Naive thymus-derived CD4-positive, alpha-beta T cell (primary cell): ENCODE measurements at regions of chr12 and their contacts with region 1.

Region 1: GRCh38 chr12:51341259-51342007 is 5.0 kb downstream of the CELA1 start:
- DNase-seq: peak; percentile 36 to 79 (median 69)
- ATAC-seq: peak; percentile 96
- H3K4me3 ChIP-seq: peak overlapping the region; percentile 6
- H3K4me3 Mint-ChIP-seq: peak overlapping the region; percentile 41 to 84 (median 65)
- H3K27ac ChIP-seq: peak overlapping the region; percentile 39
- H3K27ac Mint-ChIP-seq: peak overlapping the region; percentile 38 to 92 (median 84)
- H3K4me1 ChIP-seq: peaks cover 4 to 8% of the 10 kb centered on the region in 2 donors
- H3K4me1 Mint-ChIP-seq: peaks cover 14 to 26% (median 16%) of the 10 kb centered on the region in 7 donors
- H3K27me3 ChIP-seq: no peaks in the 10 kb centered on the region
- H3K27me3 Mint-ChIP-seq: no peaks in the 10 kb centered on the region

Region 2: GRCh38 chr12:50211392-50212070 is 1129.9 kb before region 1 on chr12:
- CTCF ChIA-PET with region 1: no interaction called
- POLR2A ChIA-PET with region 1: no interaction called
- intact Hi-C with region 1: no loop called
- DNase-seq: peak in 1 of 9 donors; percentile 20
- ATAC-seq: no peak
- H3K4me3 ChIP-seq: peak overlapping the region; percentile 36
- H3K4me3 Mint-ChIP-seq: peak overlapping the region; percentile 69 to 86 (median 74)
- H3K27ac ChIP-seq: peak overlapping the region; percentile 65
- H3K27ac Mint-ChIP-seq: peak overlapping the region; percentile 86 to 98 (median 94)
- H3K4me1 ChIP-seq: peaks cover 15 to 35% of the 10 kb centered on the region in 2 donors
- H3K4me1 Mint-ChIP-seq: peaks cover 25 to 52% (median 44%) of the 10 kb centered on the region in 7 donors
- H3K27me3 ChIP-seq: no peaks in the 10 kb centered on the region
- H3K27me3 Mint-ChIP-seq: no peaks in the 10 kb centered on the region

Region 3: GRCh38 chr12:51238510-51239334 is 102.7 kb before region 1 on chr12 and contains the start of gene DAZAP2:
- CTCF ChIA-PET with region 1: interaction called, 14 read pairs
- POLR2A ChIA-PET with region 1: interaction called, 5 read pairs
- intact Hi-C with region 1: no loop called
- DNase-seq: peak; percentile 82 to 94 (median 92)
- ATAC-seq: peak; percentile 93
- H3K4me3 ChIP-seq: peak within 1 kb of the TSS; percentile 98
- H3K4me3 Mint-ChIP-seq: peak within 1 kb of the TSS; percentile 91 to 99 (median 97)
- H3K27ac ChIP-seq: peak within 1 kb of the TSS; percentile 100
- H3K27ac Mint-ChIP-seq: peak within 1 kb of the TSS; percentile 97 to 100 (median 100)
- H3K4me1 ChIP-seq: peaks cover 24 to 29% of the 10 kb centered on the region in 2 donors
- H3K4me1 Mint-ChIP-seq: peaks cover 36 to 50% (median 42%) of the 10 kb centered on the region in 7 donors
- H3K27me3 ChIP-seq: no peaks in the 10 kb centered on the region
- H3K27me3 Mint-ChIP-seq: peaks cover 0 to 4% (median 0%) of the 10 kb centered on the region in 5 donors
- total RNA-seq, gene DAZAP2: 231 to 306 (median 271) TPM

Region 4: GRCh38 chr12:51270067-51270970 is 71.1 kb before region 1 on chr12 and contains the start of gene SMAGP:
- CTCF ChIA-PET with region 1: interaction called, 62 read pairs
- POLR2A ChIA-PET with region 1: interaction called, 43 read pairs
- intact Hi-C with region 1: loop called (anchors 1 kb)
- DNase-seq: peak; percentile 13 to 62 (median 36)
- ATAC-seq: peak; percentile 68
- H3K4me3 ChIP-seq: peak within 1 kb of the TSS; percentile 57
- H3K4me3 Mint-ChIP-seq: peak within 1 kb of the TSS; percentile 90 to 98 (median 94)
- H3K27ac ChIP-seq: peak within 1 kb of the TSS; percentile 62
- H3K27ac Mint-ChIP-seq: peak within 1 kb of the TSS; percentile 55 to 96 (median 90)
- H3K4me1 ChIP-seq: peaks cover 5 to 20% of the 10 kb centered on the region in 2 donors
- H3K4me1 Mint-ChIP-seq: peaks cover 19 to 29% (median 24%) of the 10 kb centered on the region in 7 donors
- H3K27me3 ChIP-seq: no peaks in the 10 kb centered on the region
- H3K27me3 Mint-ChIP-seq: peaks cover 0 to 34% (median 0%) of the 10 kb centered on the region in 5 donors
- total RNA-seq, gene SMAGP: 1.5 to 7.4 (median 4.2) TPM

Region 5: DNA sequence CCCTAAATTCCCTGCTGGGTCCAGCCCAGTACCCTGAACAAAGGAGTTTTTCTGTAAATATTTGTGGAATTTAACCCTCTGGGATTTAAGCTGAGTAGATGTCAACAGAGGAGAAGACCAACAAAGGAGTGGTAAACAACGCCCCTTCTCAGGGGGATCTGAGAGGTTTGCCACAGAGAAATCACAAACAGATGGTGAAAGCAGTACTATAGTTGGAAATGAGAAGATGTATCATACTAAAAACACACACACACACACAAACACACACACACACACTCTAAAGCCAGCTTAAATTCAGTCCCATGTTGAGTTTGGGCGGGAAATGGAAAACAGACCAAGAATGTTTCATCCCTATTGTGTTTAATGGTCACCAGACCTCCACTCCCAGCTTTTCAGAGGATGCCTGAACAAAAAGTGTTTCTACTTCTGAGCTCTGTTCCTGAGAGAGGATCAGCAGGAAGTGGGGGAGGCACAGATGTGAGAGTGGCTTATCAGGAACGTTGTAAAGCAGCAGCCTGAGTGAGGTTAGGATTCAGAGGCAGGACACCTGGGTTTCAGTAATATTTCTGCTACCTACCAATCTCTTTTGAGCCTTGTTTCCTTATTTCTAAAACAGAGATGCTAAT is 20.6 kb before region 1 on chr12:
- CTCF ChIA-PET with region 1: interaction called, 88 read pairs
- POLR2A ChIA-PET with region 1: interaction called, 320 read pairs
- intact Hi-C with region 1: loop called (anchors 1 kb)
- DNase-seq: peak in 3 of 9 donors; percentile 20 to 34 (median 21)
- ATAC-seq: no peak
- H3K4me3 ChIP-seq: peak overlapping the region; percentile 58
- H3K4me3 Mint-ChIP-seq: peak overlapping the region; percentile 69 to 99 (median 94)
- H3K27ac ChIP-seq: peak overlapping the region; percentile 95
- H3K27ac Mint-ChIP-seq: peak overlapping the region; percentile 89 to 99 (median 96)
- H3K4me1 ChIP-seq: peaks cover 58 to 65% of the 10 kb centered on the region in 2 donors
- H3K4me1 Mint-ChIP-seq: peaks cover 56 to 90% (median 72%) of the 10 kb centered on the region in 7 donors
- H3K27me3 ChIP-seq: no peaks in the 10 kb centered on the region
- H3K27me3 Mint-ChIP-seq: no peaks in the 10 kb centered on the region

Region 6: DNA sequence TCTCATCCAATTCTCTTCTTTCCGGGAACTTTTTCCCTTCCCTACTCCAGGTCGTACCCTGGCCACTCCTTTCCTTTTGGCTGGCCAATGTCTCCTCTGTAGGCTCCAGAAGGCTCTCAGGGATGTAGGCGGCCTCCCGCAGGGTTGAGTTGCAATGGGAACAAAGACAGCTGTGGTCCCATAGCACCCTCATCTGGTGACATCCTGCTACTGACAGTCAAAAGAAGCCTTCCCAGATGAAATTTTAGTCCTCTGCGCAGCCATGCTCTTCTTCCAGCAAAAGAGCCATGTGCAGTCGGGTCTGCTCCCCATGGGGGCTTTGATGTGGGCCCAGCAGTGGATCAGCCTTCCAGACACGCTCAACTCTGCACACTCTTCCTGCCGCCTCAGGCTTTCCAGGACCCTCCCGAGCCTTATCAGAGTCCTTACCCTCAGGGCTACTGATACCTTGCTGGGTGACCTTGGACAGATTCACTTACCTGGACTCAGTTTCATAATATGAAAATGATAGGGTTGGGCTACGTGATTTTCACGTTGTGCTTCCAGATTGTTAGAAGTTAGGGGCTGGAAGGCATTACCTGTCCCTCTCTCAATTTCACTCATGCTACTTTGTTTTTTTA is 10.6 kb after region 1 on chr12:
- CTCF ChIA-PET with region 1: interaction called, 18 read pairs
- POLR2A ChIA-PET with region 1: no interaction called
- intact Hi-C with region 1: no loop called
- DNase-seq: peak; percentile 8 to 64 (median 39)
- ATAC-seq: peak; percentile 89
- H3K4me3 ChIP-seq: no peak overlapping the region
- H3K4me3 Mint-ChIP-seq: no peak overlapping the region
- H3K27ac ChIP-seq: no peak overlapping the region
- H3K27ac Mint-ChIP-seq: peak overlapping the region in 4 of 9 donors; percentile 7 to 65 (median 22)
- H3K4me1 ChIP-seq: no peaks in the 10 kb centered on the region
- H3K4me1 Mint-ChIP-seq: peaks cover 0 to 10% (median 5%) of the 10 kb centered on the region in 7 donors
- H3K27me3 ChIP-seq: no peaks in the 10 kb centered on the region
- H3K27me3 Mint-ChIP-seq: peaks cover 0 to 4% (median 0%) of the 10 kb centered on the region in 5 donors

Region 7: DNA sequence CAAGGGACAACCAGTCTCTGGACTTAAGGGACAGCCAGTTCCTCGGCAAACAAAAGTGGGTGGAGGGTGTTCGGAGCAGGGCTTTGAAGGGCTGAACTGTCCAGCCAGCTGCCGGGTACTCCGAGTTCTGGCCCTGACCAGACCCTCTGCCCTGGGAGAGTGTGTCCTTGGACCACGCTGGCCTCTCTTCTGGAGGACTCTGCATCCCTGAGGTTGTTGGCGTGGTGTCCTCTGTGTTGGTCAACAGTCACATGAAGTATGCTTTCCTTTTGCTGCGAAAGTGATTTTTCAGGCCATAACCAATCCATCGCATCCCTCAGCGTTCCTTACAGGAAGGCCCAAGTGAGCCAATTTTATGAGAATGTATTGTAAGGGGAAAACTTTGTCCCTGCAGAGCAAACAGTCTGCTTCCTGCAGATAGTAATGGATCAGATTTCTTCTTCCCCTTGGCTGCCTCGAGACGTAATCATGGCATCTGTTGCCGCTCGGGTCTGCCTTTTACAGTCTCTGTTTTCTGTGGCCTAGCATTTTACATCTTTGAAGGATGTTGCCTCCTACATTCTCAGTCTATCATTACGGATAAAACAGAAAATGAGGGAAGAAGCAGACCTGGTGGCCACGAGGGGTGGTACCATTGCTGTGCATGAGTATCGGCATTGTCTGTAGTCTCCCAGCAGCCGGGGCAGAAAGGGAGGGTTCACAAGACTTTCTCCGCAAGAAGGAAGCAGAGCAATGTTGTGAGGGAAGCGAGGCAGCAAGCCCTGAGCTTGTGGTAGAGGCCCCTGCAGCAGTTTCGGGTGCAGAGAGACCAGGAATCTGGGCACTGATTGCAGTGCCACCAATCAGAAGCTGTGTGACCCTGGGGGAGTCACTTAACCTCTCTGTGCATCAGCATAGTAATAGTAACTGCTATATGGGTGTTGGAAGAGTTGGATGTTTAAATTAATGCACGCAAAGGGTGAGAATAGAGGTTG is 785.5 kb after region 1 on chr12:
- CTCF ChIA-PET with region 1: no interaction called
- POLR2A ChIA-PET with region 1: no interaction called
- intact Hi-C with region 1: no loop called
- DNase-seq: no peak
- ATAC-seq: no peak
- H3K4me3 ChIP-seq: no peak overlapping the region
- H3K4me3 Mint-ChIP-seq: no peak overlapping the region
- H3K27ac ChIP-seq: no peak overlapping the region
- H3K27ac Mint-ChIP-seq: no peak overlapping the region
- H3K4me1 ChIP-seq: no peaks in the 10 kb centered on the region
- H3K4me1 Mint-ChIP-seq: peaks cover 0 to 5% (median under 1%) of the 10 kb centered on the region in 7 donors
- H3K27me3 ChIP-seq: no peaks in the 10 kb centered on the region
- H3K27me3 Mint-ChIP-seq: peaks cover 7 to 31% (median 19%) of the 10 kb centered on the region in 5 donors